Mucosa of descending colon (tissue), 3 donors: ENCODE measurements at regions of chr5 and their contacts with region 1.

Region 1: GRCh38 chr5:146254223-146254622 is 50.8 kb downstream of the RBM27 start:
- DNase-seq: no peak
- ATAC-seq: no peak
- H3K4me3 ChIP-seq: no peak overlapping the region
- H3K4me1 ChIP-seq: no peaks in the 10 kb centered on the region
- CTCF ChIP-seq: no peak

Region 2: GRCh38 chr5:146173597-146173996 is 80.6 kb before region 1 on chr5:
- intact Hi-C with region 1: no loop called
- DNase-seq: no peak
- ATAC-seq: no peak
- H3K4me3 ChIP-seq: no peak overlapping the region
- H3K4me1 ChIP-seq: no peaks in the 10 kb centered on the region
- CTCF ChIP-seq: no peak

Region 3: DNA sequence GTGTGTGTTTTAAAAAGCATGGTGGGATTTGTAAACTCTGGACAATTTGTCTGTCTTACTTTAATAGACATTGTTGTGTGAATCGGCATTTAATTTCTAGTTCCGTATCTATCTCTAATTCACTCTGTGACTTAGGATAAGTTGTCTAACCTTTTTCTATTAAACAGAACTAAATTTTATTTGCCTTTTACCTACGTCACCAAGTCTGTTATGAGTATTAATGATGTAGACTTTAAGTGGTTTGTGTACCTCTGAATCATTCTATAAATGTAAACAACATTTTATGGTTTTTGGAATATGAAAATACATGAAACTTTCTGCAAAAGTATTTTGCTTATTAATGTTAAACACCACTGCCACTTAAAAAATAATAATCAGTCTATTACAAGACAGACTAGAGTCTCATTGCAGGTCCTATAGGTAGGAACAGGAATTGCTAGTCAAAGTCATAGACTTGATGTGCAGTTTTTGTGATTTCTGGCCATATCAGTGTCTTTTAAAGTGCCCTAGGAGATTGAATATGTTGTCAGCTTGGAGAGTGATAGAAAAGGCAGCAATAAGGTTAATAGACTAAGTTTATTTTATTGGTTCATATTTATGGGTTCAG is 45.2 kb before region 1 on chr5:
- intact Hi-C with region 1: loop called in 1 of 2 experiments (anchors 2 kb)
- DNase-seq: no peak
- ATAC-seq: no peak
- H3K4me3 ChIP-seq: no peak overlapping the region
- H3K4me1 ChIP-seq: peaks cover 9% of the 10 kb centered on the region
- CTCF ChIP-seq: no peak

Region 4: GRCh38 chr5:146306838-146307237 is 52.6 kb after region 1 on chr5:
- intact Hi-C with region 1: no loop called
- DNase-seq: no peak
- ATAC-seq: no peak
- H3K4me3 ChIP-seq: no peak overlapping the region
- H3K4me1 ChIP-seq: no peaks in the 10 kb centered on the region
- CTCF ChIP-seq: no peak